ENCODE measurements at regions of chr17 and their contacts with region 1.

Region 1: DNA sequence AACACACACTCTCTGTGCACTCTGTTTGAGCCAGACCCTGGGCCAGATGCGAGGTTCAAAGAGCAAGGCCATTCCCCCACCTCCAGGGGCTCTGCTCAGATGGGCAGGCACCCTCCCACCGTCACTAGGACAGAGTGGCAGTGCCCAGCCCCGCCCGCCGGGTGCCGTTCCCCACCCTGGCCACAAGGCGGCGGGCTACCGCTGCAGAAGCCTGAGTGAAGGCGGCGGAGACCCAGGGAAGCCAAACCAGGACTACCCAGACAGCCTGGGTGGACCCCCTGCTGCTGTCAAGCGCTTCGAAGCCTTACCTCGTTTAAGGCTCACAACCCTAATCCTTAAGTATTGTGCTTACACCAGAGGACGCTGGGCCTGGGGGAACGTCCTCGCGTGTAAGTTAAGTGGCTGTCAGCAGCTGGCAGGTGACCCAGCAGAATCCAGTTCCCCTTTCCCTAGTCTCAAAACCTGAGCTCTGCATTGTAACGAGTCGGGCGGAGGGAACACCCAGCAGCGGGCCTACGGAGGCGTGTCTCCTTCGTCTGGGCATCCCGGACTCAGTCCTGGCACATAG is 4.5 kb downstream of the ARHGAP27 start:
- DNase-seq: peak; percentile 57
- ATAC-seq: peak; percentile 35
- H3K4me3 ChIP-seq: peak overlapping the region; percentile 3 to 8; a peak in 1 of 4 replicates
- H3K27ac ChIP-seq: no peak overlapping the region
- H3K4me1 ChIP-seq: peaks cover 16 to 56% of the 10 kb centered on the region in 2 experiments
- H3K27me3 ChIP-seq: no peaks in the 10 kb centered on the region
- CTCF ChIP-seq: peak; percentile 93 to 99 (median 99)
- POLR2A ChIP-seq: no peak
- RAD21 ChIP-seq: peak; percentile 98

Region 2: DNA sequence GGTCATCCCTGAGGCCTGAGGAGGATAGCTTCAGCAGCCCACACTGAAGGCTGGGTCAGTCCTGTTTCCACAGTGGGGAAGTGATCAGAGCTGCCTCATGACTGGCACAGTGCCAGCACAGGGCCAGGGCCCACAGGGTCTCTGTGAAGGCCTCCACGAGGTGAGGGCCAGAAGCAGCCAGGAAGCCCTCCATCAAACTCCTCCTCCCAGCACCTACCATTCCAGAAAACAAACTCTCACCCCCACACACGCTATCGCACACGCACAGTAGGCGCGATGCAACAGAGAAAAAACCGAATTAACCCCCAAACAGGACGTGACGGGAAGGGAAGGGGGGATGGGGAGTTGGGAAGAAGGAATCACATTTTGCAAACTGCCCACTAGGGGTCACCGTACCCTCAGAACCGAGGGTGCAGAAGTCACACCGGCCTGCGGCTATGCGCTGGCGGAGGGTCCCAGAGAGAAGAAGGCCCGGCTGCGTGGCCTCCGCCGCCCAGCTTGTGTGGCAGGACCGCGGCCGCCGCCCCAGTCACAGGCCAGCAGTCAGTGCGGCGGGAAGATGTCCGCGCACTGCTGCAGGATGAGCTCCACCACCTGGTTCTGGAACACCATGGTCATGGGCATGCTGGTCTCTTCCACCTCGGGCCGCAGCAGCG is 33.1 kb before region 1 on chr17:
- CTCF ChIA-PET with region 1: interaction called, 58 read pairs
- POLR2A ChIA-PET with region 1: interaction called, 6 read pairs
- RAD21 ChIA-PET with region 1: interaction called in 1 of 2 experiments, 3 read pairs
- intact Hi-C with region 1: loop called (anchors 1 kb)
- DNase-seq: peak; percentile 45
- ATAC-seq: peak; percentile 79
- H3K4me3 ChIP-seq: no peak overlapping the region
- H3K27ac ChIP-seq: no peak overlapping the region
- H3K4me1 ChIP-seq: peaks cover 0 to 16% of the 10 kb centered on the region in 2 experiments; a peak in 2 of 4 replicates
- H3K27me3 ChIP-seq: no peaks in the 10 kb centered on the region
- CTCF ChIP-seq: peak; percentile 79 to 90 (median 86)
- POLR2A ChIP-seq: no peak
- RAD21 ChIP-seq: peak; percentile 93

Region 3: GRCh38 chr17:45451141-45451540 is 23.0 kb after region 1 on chr17:
- CTCF ChIA-PET with region 1: no interaction called
- POLR2A ChIA-PET with region 1: no interaction called
- RAD21 ChIA-PET with region 1: no interaction called
- intact Hi-C with region 1: no loop called
- DNase-seq: no peak
- ATAC-seq: peak; percentile 58; the same call in 1 of the 2 replicates
- H3K4me3 ChIP-seq: no peak overlapping the region
- H3K27ac ChIP-seq: no peak overlapping the region
- H3K4me1 ChIP-seq: peaks cover 0 to 2% of the 10 kb centered on the region in 2 experiments; a peak in 1 of 4 replicates
- H3K27me3 ChIP-seq: no peaks in the 10 kb centered on the region
- CTCF ChIP-seq: peak; percentile 16 to 45 (median 20); a peak in 1 of 6 replicates
- POLR2A ChIP-seq: no peak
- RAD21 ChIP-seq: peak; percentile 35; the same call in 1 of the 2 replicates

Region 4: GRCh38 chr17:45584092-45585036 is 156.2 kb after region 1 on chr17:
- CTCF ChIA-PET with region 1: no interaction called
- POLR2A ChIA-PET with region 1: no interaction called
- RAD21 ChIA-PET with region 1: interaction called in 1 of 2 experiments, 3 read pairs
- intact Hi-C with region 1: loop called (anchors 2 kb)
- DNase-seq: peak; percentile 39
- ATAC-seq: peak; percentile 71
- H3K4me3 ChIP-seq: peak overlapping the region; percentile 54 to 66
- H3K27ac ChIP-seq: peak overlapping the region; percentile 90
- H3K4me1 ChIP-seq: peaks cover 10 to 24% of the 10 kb centered on the region in 2 experiments; a peak in 3 of 4 replicates
- H3K27me3 ChIP-seq: no peaks in the 10 kb centered on the region
- CTCF ChIP-seq: no peak
- POLR2A ChIP-seq: peak; percentile 67
- RAD21 ChIP-seq: no peak